HepG2 (cell line): ENCODE measurements at regions of chr19 and their contacts with region 1.

Region 1: GRCh38 chr19:8513687-8514504 is at the start of gene ZNF414:
- DNase-seq: peak; percentile 83
- ATAC-seq: peak; percentile 87
- H3K4me3 ChIP-seq: peak within 1 kb of the TSS; percentile 89 to 95 (median 90)
- H3K27ac ChIP-seq: peak within 1 kb of the TSS; percentile 94
- H3K4me1 ChIP-seq: peaks cover 42% of the 10 kb centered on the region
- H3K27me3 ChIP-seq: 0 out of 5 replicates have a peak, but pooled peaks cover 0 to 2% of the 10 kb centered on the region in 2 experiments
- CTCF ChIP-seq: no peak
- EP300 ChIP-seq: no peak
- POLR2A ChIP-seq: peak; percentile 90 to 98
- RAD21 ChIP-seq: peak; percentile 67
- total RNA-seq, gene ZNF414: 1.4 and 2.5 TPM in 2 replicates

Region 2: DNA sequence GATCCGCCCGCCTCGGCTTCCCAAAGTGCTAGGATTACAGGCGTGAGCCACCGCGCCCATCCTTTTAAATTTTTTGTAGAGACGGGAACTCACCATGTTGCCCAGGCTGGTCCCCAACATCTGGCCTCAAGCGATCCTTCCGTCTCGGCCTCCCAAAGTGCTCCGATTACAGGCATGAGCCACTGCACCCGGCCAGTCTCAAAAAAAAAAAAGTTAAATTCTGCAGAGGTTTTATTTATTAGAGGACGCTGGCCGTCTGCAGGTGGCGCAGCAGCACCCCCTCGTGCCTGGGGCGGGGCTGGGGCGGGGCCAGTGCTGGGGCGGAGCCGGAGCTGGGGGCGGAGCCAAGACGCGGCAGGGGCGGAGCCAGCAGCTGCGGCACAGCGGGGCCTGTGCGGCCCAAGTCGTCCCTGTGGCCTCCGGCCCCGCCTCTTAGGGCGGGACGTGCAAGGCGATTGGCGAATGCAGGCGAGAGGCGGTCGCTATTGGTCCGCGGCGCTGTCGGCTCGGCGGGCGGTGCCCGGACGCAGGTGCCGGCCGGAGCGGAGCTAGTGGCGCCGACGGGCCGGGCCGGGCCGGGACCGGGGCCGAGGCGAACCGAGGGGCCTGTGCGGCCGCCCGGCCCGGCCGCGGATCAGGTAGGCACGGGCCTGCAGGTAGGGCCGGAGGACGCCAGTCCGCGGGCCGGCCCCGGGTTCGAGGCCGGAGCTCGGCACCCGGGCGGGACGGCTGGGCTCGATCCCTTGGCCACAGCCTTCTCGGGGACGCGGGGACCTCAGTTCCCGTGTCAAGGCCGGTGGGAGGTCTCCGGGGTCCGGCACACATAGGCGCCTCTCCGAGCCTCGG is 100.9 kb before region 1 on chr19 and contains the start of gene MARCHF2:
- CTCF ChIA-PET with region 1: no interaction called
- POLR2A ChIA-PET with region 1: interaction called, 12 read pairs
- in situ Hi-C with region 1: no loop called
- intact Hi-C with region 1: no loop called
- DNase-seq: peak; percentile 90
- ATAC-seq: peak; percentile 98
- H3K4me3 ChIP-seq: peak within 1 kb of the TSS; percentile 67 to 92 (median 70)
- H3K27ac ChIP-seq: no peak within 1 kb of the TSS
- H3K4me1 ChIP-seq: peaks cover 30% of the 10 kb centered on the region
- H3K27me3 ChIP-seq: no peaks in the 10 kb centered on the region
- CTCF ChIP-seq: peak; percentile 70
- EP300 ChIP-seq: 0 out of 4 replicates have a peak, but pooled peaks of 1 of the 2 experiments have one; percentile 22
- POLR2A ChIP-seq: peak in 1 of 2 experiments; percentile 28; a peak in 1 of 4 replicates
- RAD21 ChIP-seq: peak; percentile 57
- total RNA-seq, gene MARCHF2: 10.6 and 12.7 TPM in 2 replicates

Region 3: DNA sequence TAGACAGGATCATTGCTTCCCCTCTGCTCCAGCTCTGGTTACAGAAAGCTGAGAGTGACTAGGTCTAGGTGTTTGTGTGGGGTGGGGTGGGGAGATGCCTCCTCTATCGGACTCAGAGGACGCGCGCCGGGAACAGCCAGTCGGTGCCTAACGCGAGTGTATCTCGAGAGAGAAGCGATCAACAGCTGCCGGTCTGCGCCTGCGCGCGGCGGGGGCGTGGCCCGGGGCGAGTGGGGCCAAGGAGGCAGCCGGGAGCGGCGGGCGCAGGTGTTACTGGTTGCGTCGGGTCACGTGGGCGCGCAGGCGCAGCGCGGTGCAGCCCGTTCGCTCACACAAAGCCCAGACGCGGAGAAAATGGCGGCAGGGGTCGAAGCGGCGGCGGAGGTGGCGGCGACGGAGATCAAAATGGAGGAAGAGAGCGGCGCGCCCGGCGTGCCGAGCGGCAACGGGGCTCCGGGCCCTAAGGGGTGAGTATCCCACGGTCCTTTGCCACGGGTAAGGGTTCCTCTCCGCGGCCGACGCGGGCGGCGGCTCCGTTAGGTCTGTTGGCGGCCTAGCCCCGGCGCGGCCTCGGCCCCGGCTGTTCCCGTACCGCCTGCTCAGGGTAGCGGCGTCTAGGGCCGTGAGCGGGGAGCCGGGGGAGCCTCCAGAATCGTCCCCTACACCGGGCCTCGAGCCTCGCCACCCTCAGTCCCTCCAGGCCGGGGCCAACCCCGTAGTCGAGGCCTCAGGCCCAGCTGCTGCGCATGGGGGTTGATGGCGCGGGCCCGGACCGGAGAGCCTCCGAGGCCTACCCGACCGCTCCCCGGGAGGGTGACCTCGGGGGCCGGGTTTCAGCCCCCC is 69.0 kb before region 1 on chr19 and contains the start of gene HNRNPM:
- CTCF ChIA-PET with region 1: no interaction called
- POLR2A ChIA-PET with region 1: interaction called, 15 read pairs
- in situ Hi-C with region 1: no loop called
- intact Hi-C with region 1: no loop called
- DNase-seq: peak; percentile 95
- ATAC-seq: peak; percentile 91
- H3K4me3 ChIP-seq: peak within 1 kb of the TSS; percentile 93 to 99 (median 99)
- H3K27ac ChIP-seq: peak within 1 kb of the TSS; percentile 95
- H3K4me1 ChIP-seq: peaks cover 70% of the 10 kb centered on the region
- H3K27me3 ChIP-seq: no peaks in the 10 kb centered on the region
- CTCF ChIP-seq: 0 out of 2 replicates have a peak, but pooled peaks have one; percentile 2
- EP300 ChIP-seq: 0 out of 4 replicates have a peak, but pooled peaks of 1 of the 2 experiments have one; percentile 16
- POLR2A ChIP-seq: peak; percentile 75 to 85
- RAD21 ChIP-seq: peak; percentile 38
- total RNA-seq, gene HNRNPM: 102 and 144 TPM in 2 replicates

Region 4: GRCh38 chr19:8494158-8494557 is 19.7 kb before region 1 on chr19:
- CTCF ChIA-PET with region 1: no interaction called
- POLR2A ChIA-PET with region 1: interaction called, 10 read pairs
- in situ Hi-C with region 1: no loop called
- intact Hi-C with region 1: no loop called
- DNase-seq: no peak
- ATAC-seq: peak; percentile 13; the same call in 1 of the 3 replicates
- H3K4me3 ChIP-seq: peak overlapping the region in 1 of 3 experiments; percentile 28; a peak in 1 of 6 replicates
- H3K27ac ChIP-seq: no peak overlapping the region
- H3K4me1 ChIP-seq: peaks cover 10% of the 10 kb centered on the region
- H3K27me3 ChIP-seq: peaks cover 0 to 10% of the 10 kb centered on the region in 2 experiments; a peak in 1 of 5 replicates
- CTCF ChIP-seq: no peak
- EP300 ChIP-seq: no peak
- POLR2A ChIP-seq: no peak
- RAD21 ChIP-seq: no peak

Region 5: GRCh38 chr19:8526345-8527067 is 12.6 kb after region 1 on chr19:
- CTCF ChIA-PET with region 1: no interaction called
- POLR2A ChIA-PET with region 1: interaction called, 125 read pairs
- in situ Hi-C with region 1: no loop called
- intact Hi-C with region 1: no loop called
- DNase-seq: peak; percentile 87
- ATAC-seq: peak; percentile 81
- H3K4me3 ChIP-seq: peak overlapping the region; percentile 60 to 78 (median 70)
- H3K27ac ChIP-seq: peak overlapping the region; percentile 77
- H3K4me1 ChIP-seq: peaks cover 24% of the 10 kb centered on the region
- H3K27me3 ChIP-seq: no peaks in the 10 kb centered on the region
- CTCF ChIP-seq: no peak
- EP300 ChIP-seq: no peak
- POLR2A ChIP-seq: peak in 1 of 2 experiments; percentile 92; a peak in 3 of 4 replicates
- RAD21 ChIP-seq: 0 out of 2 replicates have a peak, but pooled peaks have one; percentile 6

Region 6: GRCh38 chr19:8571006-8571411 is 57.1 kb after region 1 on chr19:
- CTCF ChIA-PET with region 1: no interaction called
- POLR2A ChIA-PET with region 1: no interaction called
- in situ Hi-C with region 1: no loop called
- intact Hi-C with region 1: no loop called
- DNase-seq: peak; percentile 34
- ATAC-seq: no peak; the same call in 1 of the 3 replicates
- H3K4me3 ChIP-seq: no peak overlapping the region
- H3K27ac ChIP-seq: no peak overlapping the region
- H3K4me1 ChIP-seq: no peaks in the 10 kb centered on the region
- H3K27me3 ChIP-seq: peaks cover 0 to 5% of the 10 kb centered on the region in 2 experiments; a peak in 2 of 5 replicates
- CTCF ChIP-seq: no peak
- EP300 ChIP-seq: no peak
- POLR2A ChIP-seq: no peak
- RAD21 ChIP-seq: no peak

Region 7: DNA sequence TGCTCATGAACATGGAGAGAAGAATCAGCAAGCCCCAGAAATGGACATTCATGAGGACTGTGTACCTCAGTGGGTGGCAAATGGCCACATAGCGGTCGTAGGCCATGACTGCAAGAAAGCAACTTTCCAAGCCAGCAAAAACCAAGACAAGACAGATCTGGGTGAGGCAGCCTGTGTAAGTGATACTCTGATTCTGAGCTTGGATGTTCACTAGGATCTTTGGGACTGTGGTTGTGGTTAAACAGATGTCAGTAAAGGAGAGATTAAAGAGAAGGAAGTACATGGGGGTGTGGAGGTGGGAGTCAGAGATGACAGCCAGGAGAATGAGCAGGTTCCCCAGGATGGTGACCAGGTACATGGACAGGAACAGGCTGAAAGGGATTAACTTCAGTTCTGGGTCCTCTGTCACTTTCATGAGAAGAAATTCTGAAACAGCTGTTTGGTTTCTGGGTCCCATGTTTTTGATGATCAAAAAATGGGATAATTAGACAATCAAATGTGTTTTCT is 601.5 kb after region 1 on chr19 and contains the start of gene OR7G1:
- CTCF ChIA-PET with region 1: no interaction called
- POLR2A ChIA-PET with region 1: no interaction called
- in situ Hi-C with region 1: no loop called
- intact Hi-C with region 1: no loop called
- DNase-seq: no peak
- ATAC-seq: no peak
- H3K4me3 ChIP-seq: no peak within 1 kb of the TSS
- H3K27ac ChIP-seq: no peak within 1 kb of the TSS
- H3K4me1 ChIP-seq: peaks cover 5% of the 10 kb centered on the region
- H3K27me3 ChIP-seq: no peaks in the 10 kb centered on the region
- CTCF ChIP-seq: no peak
- EP300 ChIP-seq: no peak
- POLR2A ChIP-seq: no peak
- RAD21 ChIP-seq: no peak
- total RNA-seq, gene OR7G1: not detected in 2 replicates